AG04449 (cell line): ENCODE measurements at regions of chr17 and their contacts with region 1.

Region 1: GRCh38 chr17:81860756-81861518 is 602 bp upstream of the P4HB start:
- DNase-seq: peak; percentile 100
- H3K4me3 ChIP-seq: peak overlapping the region; percentile 67
- CTCF ChIP-seq: no peak

Region 2: GRCh38 chr17:81733507-81734404 is 127.2 kb before region 1 on chr17:
- CTCF ChIA-PET with region 1: interaction called, 16 read pairs
- POLR2A ChIA-PET with region 1: no interaction called
- DNase-seq: no peak
- H3K4me3 ChIP-seq: no peak overlapping the region
- CTCF ChIP-seq: peak; percentile 97